Activated CD8-positive, alpha-beta T cell treated with anti-CD3 and anti-CD28 coated beads for 36 hours (primary cell): ENCODE measurements at regions of chr2 and their contacts with region 1.

Region 1: DNA sequence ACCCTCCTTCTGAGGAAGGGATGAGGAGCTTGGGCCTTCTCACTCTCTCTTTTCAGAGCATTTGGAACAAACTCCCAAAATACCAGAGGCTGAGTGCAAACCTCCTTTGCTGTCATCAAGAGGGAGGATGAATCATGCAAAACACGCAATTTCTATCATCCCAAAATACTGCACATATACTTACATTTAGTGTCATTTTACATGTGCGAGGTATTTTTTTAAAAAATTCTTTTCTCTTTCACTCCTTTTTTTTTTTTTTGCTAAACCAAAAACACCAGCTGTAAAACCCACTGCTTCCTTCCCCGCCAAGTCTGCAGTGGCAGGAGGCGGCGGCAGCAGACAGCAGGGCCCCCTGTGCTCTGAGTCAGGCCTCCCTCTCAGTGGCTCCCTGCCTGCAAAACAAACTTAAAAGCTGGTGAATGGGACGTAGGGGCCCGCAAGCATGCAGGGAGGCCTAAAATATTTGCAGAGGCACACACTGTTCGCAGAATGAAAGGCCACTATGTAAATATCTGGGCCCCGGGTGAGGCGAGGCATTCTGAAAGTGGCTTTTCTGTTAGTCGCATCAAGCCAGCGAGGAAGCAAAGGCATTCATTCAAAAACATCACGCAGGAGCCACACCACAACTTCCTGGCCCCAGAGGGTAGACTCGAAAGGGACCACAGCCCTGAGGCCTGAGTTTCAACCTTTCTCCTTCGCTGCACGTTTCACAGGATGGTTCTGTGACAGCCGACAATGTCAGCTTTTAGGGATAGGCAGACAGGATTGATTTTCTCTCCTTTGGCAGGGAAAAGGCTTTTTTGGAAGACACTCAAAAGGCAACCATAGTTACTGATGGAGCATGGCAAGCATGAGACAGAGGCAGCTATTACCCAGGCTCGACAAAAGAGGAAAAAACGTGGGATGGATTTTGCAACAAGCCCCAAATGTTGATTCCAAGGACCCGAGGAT is 73.4 kb downstream of the ACTR2 start:
- DNase-seq: peak; percentile 92
- ATAC-seq: peak; percentile 93
- H3K4me3 Mint-ChIP-seq: peak overlapping the region; percentile 46
- H3K27ac Mint-ChIP-seq: peak overlapping the region; percentile 85
- H3K4me1 Mint-ChIP-seq: peaks cover 44% of the 10 kb centered on the region
- H3K27me3 Mint-ChIP-seq: peaks cover 12% of the 10 kb centered on the region
- CTCF ChIP-seq: no peak

Region 2: DNA sequence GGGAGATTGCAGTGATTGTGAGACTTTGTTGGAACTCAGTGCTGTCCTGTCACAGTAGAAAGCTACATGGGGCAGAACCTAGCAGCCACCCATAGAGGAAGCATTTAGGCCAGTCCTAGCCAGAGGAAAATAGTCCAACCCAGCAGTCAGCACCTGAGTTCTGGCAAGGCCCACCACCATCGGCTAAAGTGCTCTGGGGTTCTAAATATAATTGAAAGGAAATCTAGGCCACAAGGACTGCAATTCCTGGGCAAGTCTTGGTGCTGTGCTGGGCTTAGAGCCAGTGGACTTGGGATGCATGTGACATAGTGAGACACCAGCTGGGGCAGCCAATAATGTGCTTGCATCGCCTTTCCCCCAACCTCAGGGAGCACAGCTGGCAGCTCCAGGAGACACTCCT is 102.3 kb before region 1 on chr2:
- CTCF ChIA-PET with region 1: no interaction called
- POLR2A ChIA-PET with region 1: no interaction called
- intact Hi-C with region 1: no loop called
- DNase-seq: no peak
- ATAC-seq: no peak
- H3K4me3 Mint-ChIP-seq: no peak overlapping the region
- H3K27ac Mint-ChIP-seq: no peak overlapping the region
- H3K4me1 Mint-ChIP-seq: no peaks in the 10 kb centered on the region
- H3K27me3 Mint-ChIP-seq: peaks cover 2% of the 10 kb centered on the region
- CTCF ChIP-seq: no peak

Region 3: GRCh38 chr2:65227425-65228262 is 73.4 kb before region 1 on chr2 and contains the start of gene ACTR2:
- CTCF ChIA-PET with region 1: no interaction called
- POLR2A ChIA-PET with region 1: interaction called, 13 read pairs
- intact Hi-C with region 1: no loop called
- DNase-seq: peak; percentile 97
- ATAC-seq: peak; percentile 94
- H3K4me3 Mint-ChIP-seq: peak within 1 kb of the TSS; percentile 99
- H3K27ac Mint-ChIP-seq: peak within 1 kb of the TSS; percentile 100
- H3K4me1 Mint-ChIP-seq: peaks cover 28% of the 10 kb centered on the region
- H3K27me3 Mint-ChIP-seq: no peaks in the 10 kb centered on the region
- CTCF ChIP-seq: no peak
- total RNA-seq, gene ACTR2: 331 to 341 TPM

Region 4: DNA sequence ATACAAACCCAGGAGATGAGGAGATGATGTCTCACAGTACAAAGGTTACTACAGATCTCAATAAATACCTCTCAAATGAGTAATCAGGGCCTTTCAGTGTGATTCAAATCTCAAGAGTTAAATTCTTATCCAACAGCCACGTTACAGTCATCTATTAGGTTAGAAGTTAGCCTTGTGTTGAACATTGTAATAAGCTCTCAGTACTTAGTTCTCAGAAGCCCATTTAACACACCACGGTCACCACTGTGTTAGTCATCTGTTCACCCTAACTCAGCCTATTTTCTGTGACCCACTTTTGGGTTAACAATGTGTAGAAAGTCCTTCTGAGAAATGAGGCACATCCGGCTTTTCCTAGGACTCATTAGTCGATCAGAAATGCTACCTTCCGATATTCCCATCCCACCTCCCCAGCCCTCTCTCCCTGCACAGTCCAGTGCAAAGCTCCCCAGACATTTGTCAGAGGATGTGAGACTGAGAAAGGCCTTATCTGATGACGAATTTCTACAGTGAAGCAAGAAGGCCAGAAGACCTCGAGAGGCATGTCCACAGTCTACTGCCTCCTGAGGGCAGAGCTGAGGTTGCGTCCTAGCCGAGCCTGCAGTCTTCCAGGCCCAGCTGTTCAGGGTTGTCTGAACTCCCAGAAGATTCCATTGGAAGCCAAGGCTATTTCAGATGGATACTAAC is 19.1 kb after region 1 on chr2:
- CTCF ChIA-PET with region 1: interaction called, 9 read pairs
- POLR2A ChIA-PET with region 1: interaction called, 13 read pairs
- intact Hi-C with region 1: no loop called
- DNase-seq: peak; percentile 48
- ATAC-seq: peak; percentile 87
- H3K4me3 Mint-ChIP-seq: no peak overlapping the region
- H3K27ac Mint-ChIP-seq: peak overlapping the region; percentile 64
- H3K4me1 Mint-ChIP-seq: peaks cover 20% of the 10 kb centered on the region
- H3K27me3 Mint-ChIP-seq: no peaks in the 10 kb centered on the region
- CTCF ChIP-seq: no peak

Region 5: GRCh38 chr2:65366595-65367125 is 65.6 kb after region 1 on chr2:
- CTCF ChIA-PET with region 1: no interaction called
- POLR2A ChIA-PET with region 1: no interaction called
- intact Hi-C with region 1: loop called (anchors 5 kb)
- DNase-seq: peak; percentile 65
- ATAC-seq: peak; percentile 91
- H3K4me3 Mint-ChIP-seq: no peak overlapping the region
- H3K27ac Mint-ChIP-seq: no peak overlapping the region
- H3K4me1 Mint-ChIP-seq: peaks cover 13% of the 10 kb centered on the region
- H3K27me3 Mint-ChIP-seq: no peaks in the 10 kb centered on the region
- CTCF ChIP-seq: no peak

Region 6: GRCh38 chr2:65436169-65436823 is 135.3 kb after region 1 on chr2:
- CTCF ChIA-PET with region 1: interaction called, 3 read pairs
- POLR2A ChIA-PET with region 1: interaction called, 11 read pairs
- intact Hi-C with region 1: loop called (anchors 5 kb)
- DNase-seq: peak; percentile 59
- ATAC-seq: peak; percentile 4
- H3K4me3 Mint-ChIP-seq: peak overlapping the region; percentile 81
- H3K27ac Mint-ChIP-seq: peak overlapping the region; percentile 67
- H3K4me1 Mint-ChIP-seq: peaks cover 18% of the 10 kb centered on the region
- H3K27me3 Mint-ChIP-seq: peaks cover 49% of the 10 kb centered on the region
- CTCF ChIP-seq: no peak